ENCODE measurements at regions of chr12 and their contacts with region 1.

Region 1: GRCh38 chr12:15220994-15221885 is at the start of gene RERG:
- DNase-seq: peak; percentile 86
- ATAC-seq: peak; percentile 99
- H3K4me3 Mint-ChIP-seq: peak within 1 kb of the TSS; percentile 36
- H3K27ac Mint-ChIP-seq: no peak within 1 kb of the TSS
- H3K4me1 Mint-ChIP-seq: peaks cover 2% of the 10 kb centered on the region
- H3K27me3 Mint-ChIP-seq: peaks cover 32% of the 10 kb centered on the region
- total RNA-seq, gene RERG: not detected

Region 2: GRCh38 chr12:14723763-14724162 is 497.5 kb before region 1 on chr12:
- CTCF ChIA-PET with region 1: interaction called, 10 read pairs
- POLR2A ChIA-PET with region 1: no interaction called
- intact Hi-C with region 1: loop called (anchors 1 to 2 kb)
- DNase-seq: peak; percentile 72
- ATAC-seq: peak; percentile 80
- H3K4me3 Mint-ChIP-seq: no peak overlapping the region
- H3K27ac Mint-ChIP-seq: no peak overlapping the region
- H3K4me1 Mint-ChIP-seq: no peaks in the 10 kb centered on the region
- H3K27me3 Mint-ChIP-seq: peaks cover 5% of the 10 kb centered on the region

Region 3: GRCh38 chr12:14845350-14845750 is 375.9 kb before region 1 on chr12:
- CTCF ChIA-PET with region 1: interaction called, 4 read pairs
- POLR2A ChIA-PET with region 1: no interaction called
- intact Hi-C with region 1: loop called (anchors 1 to 10 kb)
- DNase-seq: peak; percentile 46
- ATAC-seq: peak; percentile 58
- H3K4me3 Mint-ChIP-seq: no peak overlapping the region
- H3K27ac Mint-ChIP-seq: no peak overlapping the region
- H3K4me1 Mint-ChIP-seq: peaks cover 11% of the 10 kb centered on the region
- H3K27me3 Mint-ChIP-seq: no peaks in the 10 kb centered on the region

Region 4: DNA sequence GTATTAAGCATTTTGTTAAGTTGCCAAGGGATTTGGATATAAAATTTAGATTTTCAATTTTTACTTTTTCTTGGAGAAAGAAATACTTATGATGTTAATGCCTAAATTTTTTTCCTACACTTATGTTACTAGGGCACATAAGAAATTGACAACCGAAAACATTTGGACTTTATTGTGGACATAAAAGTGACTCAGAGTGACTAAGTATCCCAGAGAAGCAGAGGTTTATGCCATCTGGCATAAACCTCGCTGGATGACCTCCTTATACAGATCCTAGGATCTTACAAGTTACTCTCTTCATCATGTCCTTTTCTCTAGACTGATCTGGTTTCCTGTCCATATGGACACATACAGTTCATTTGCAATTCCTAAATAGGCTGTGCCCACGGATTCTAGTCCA is 89.8 kb before region 1 on chr12:
- CTCF ChIA-PET with region 1: no interaction called
- POLR2A ChIA-PET with region 1: no interaction called
- intact Hi-C with region 1: no loop called
- DNase-seq: no peak
- ATAC-seq: no peak
- H3K4me3 Mint-ChIP-seq: no peak overlapping the region
- H3K27ac Mint-ChIP-seq: no peak overlapping the region
- H3K4me1 Mint-ChIP-seq: no peaks in the 10 kb centered on the region
- H3K27me3 Mint-ChIP-seq: peaks cover 1% of the 10 kb centered on the region

Region 5: GRCh38 chr12:15151161-15152120 is 69.8 kb before region 1 on chr12:
- CTCF ChIA-PET with region 1: interaction called, 15 read pairs
- POLR2A ChIA-PET with region 1: no interaction called
- intact Hi-C with region 1: loop called (anchors 1 kb)
- DNase-seq: no peak
- ATAC-seq: no peak
- H3K4me3 Mint-ChIP-seq: no peak overlapping the region
- H3K27ac Mint-ChIP-seq: no peak overlapping the region
- H3K4me1 Mint-ChIP-seq: no peaks in the 10 kb centered on the region
- H3K27me3 Mint-ChIP-seq: peaks cover 2% of the 10 kb centered on the region

Region 6: GRCh38 chr12:15193946-15194345 is 27.3 kb before region 1 on chr12:
- CTCF ChIA-PET with region 1: interaction called, 11 read pairs
- POLR2A ChIA-PET with region 1: no interaction called
- intact Hi-C with region 1: no loop called
- DNase-seq: no peak
- ATAC-seq: no peak
- H3K4me3 Mint-ChIP-seq: no peak overlapping the region
- H3K27ac Mint-ChIP-seq: no peak overlapping the region
- H3K4me1 Mint-ChIP-seq: no peaks in the 10 kb centered on the region
- H3K27me3 Mint-ChIP-seq: peaks cover 9% of the 10 kb centered on the region

Region 7: GRCh38 chr12:15205341-15206010 is 15.8 kb before region 1 on chr12:
- CTCF ChIA-PET with region 1: interaction called, 11 read pairs
- POLR2A ChIA-PET with region 1: no interaction called
- intact Hi-C with region 1: no loop called
- DNase-seq: no peak
- ATAC-seq: no peak
- H3K4me3 Mint-ChIP-seq: no peak overlapping the region
- H3K27ac Mint-ChIP-seq: no peak overlapping the region
- H3K4me1 Mint-ChIP-seq: no peaks in the 10 kb centered on the region
- H3K27me3 Mint-ChIP-seq: peaks cover 9% of the 10 kb centered on the region

Region 8: GRCh38 chr12:15268927-15269552 is 47.8 kb after region 1 on chr12:
- CTCF ChIA-PET with region 1: interaction called, 4 read pairs
- POLR2A ChIA-PET with region 1: no interaction called
- intact Hi-C with region 1: loop called in 1 of 2 experiments (anchors 2 kb)
- DNase-seq: peak; percentile 56
- ATAC-seq: peak; percentile 71
- H3K4me3 Mint-ChIP-seq: no peak overlapping the region
- H3K27ac Mint-ChIP-seq: no peak overlapping the region
- H3K4me1 Mint-ChIP-seq: no peaks in the 10 kb centered on the region
- H3K27me3 Mint-ChIP-seq: peaks cover 2% of the 10 kb centered on the region